HCT116 (cell line): ENCODE measurements at regions of chr19 and their contacts with region 1.

Region 1: DNA sequence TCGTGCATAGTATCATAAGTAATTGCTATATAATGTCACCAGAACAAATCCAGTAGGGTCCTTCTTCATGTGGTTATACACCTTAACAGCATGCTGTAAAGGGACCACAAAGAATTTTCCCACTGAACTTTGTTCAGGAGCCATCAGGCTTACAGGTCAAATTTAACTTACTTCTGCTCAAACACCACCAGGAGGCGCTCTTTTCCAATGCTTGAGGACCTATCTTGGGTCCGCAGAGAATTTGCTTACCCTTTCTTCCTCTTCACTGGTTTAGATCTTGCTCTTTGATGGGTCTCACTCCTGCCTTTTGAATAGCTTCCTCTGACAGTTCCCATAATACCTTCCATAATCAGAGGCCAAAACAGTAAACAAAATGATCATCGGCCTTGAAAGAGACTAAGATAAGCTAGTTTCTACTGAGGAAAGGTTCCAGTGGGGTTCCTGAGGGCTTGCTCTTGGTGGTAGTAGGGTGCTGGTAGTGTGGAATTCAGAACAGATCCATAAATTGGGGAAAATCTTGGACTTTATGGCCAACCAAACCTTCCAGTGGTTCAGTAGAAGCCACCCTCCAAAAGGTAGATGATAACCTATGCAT is 37.4 kb downstream of the SCGB2B2 start:
- DNase-seq: peak; percentile 53
- ATAC-seq: peak; percentile 78
- H3K4me3 ChIP-seq: no peak overlapping the region
- H3K27ac ChIP-seq: no peak overlapping the region
- H3K4me1 ChIP-seq: no peaks in the 10 kb centered on the region
- H3K27me3 ChIP-seq: no peaks in the 10 kb centered on the region
- CTCF ChIP-seq: peak; percentile 72 to 84 (median 79); a peak in 5 of 6 replicates
- POLR2A ChIP-seq: no peak
- RAD21 ChIP-seq: peak; percentile 84

Region 2: GRCh38 chr19:34595313-34596082 is 44.1 kb before region 1 on chr19:
- CTCF ChIA-PET with region 1: no interaction called
- POLR2A ChIA-PET with region 1: no interaction called
- RAD21 ChIA-PET with region 1: no interaction called
- intact Hi-C with region 1: no loop called
- DNase-seq: no peak
- ATAC-seq: no peak
- H3K4me3 ChIP-seq: no peak overlapping the region
- H3K27ac ChIP-seq: no peak overlapping the region
- H3K4me1 ChIP-seq: peaks cover 0 to 8% of the 10 kb centered on the region in 2 experiments; a peak in 1 of 4 replicates
- H3K27me3 ChIP-seq: no peaks in the 10 kb centered on the region
- CTCF ChIP-seq: no peak
- POLR2A ChIP-seq: no peak
- RAD21 ChIP-seq: no peak

Region 3: DNA sequence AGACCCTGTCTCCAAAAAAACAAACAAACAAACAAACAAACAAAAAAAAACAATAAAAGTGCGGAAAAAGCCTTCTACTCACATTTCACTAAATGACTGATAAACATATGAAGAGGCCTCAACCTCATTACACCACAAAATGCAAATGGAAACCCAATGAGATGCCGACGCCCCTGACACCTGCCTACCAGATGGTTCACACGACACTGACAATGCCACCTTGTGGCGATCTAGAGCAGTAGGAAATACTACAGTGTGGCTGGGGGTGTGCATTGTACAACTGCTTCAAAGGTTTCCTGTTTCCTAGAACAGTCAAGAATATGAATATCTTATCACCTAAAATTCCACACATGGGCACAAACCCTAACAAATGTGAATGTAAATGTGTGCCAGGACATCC is 23.3 kb after region 1 on chr19:
- CTCF ChIA-PET with region 1: interaction called, 5 read pairs
- POLR2A ChIA-PET with region 1: no interaction called
- RAD21 ChIA-PET with region 1: no interaction called
- intact Hi-C with region 1: loop called (anchors 1 kb)
- DNase-seq: peak; percentile 41
- ATAC-seq: peak; percentile 98
- H3K4me3 ChIP-seq: no peak overlapping the region
- H3K27ac ChIP-seq: no peak overlapping the region
- H3K4me1 ChIP-seq: peaks cover 0 to 3% of the 10 kb centered on the region in 2 experiments; a peak in 1 of 4 replicates
- H3K27me3 ChIP-seq: no peaks in the 10 kb centered on the region
- CTCF ChIP-seq: peak; percentile 64 to 74 (median 71); a peak in 5 of 6 replicates
- POLR2A ChIP-seq: no peak
- RAD21 ChIP-seq: peak; percentile 62